ENCODE measurements at regions of chr3 and their contacts with region 1.

Region 1: GRCh38 chr3:187150599-187150998 is 11.3 kb upstream of the RPL39L start:
- DNase-seq: peak; percentile 71
- H3K4me3 Mint-ChIP-seq: no peak overlapping the region
- H3K27ac Mint-ChIP-seq: no peak overlapping the region
- H3K4me1 Mint-ChIP-seq: peaks cover 2% of the 10 kb centered on the region
- H3K27me3 Mint-ChIP-seq: peaks cover 49% of the 10 kb centered on the region

Region 2: GRCh38 chr3:187101184-187102072 is 49.2 kb before region 1 on chr3:
- CTCF ChIA-PET with region 1: interaction called, 12 read pairs
- POLR2A ChIA-PET with region 1: no interaction called
- DNase-seq: peak; percentile 64
- H3K4me3 Mint-ChIP-seq: peak overlapping the region; percentile 56
- H3K27ac Mint-ChIP-seq: peak overlapping the region; percentile 44
- H3K4me1 Mint-ChIP-seq: peaks cover 56% of the 10 kb centered on the region
- H3K27me3 Mint-ChIP-seq: peaks cover 6% of the 10 kb centered on the region

Region 3: DNA sequence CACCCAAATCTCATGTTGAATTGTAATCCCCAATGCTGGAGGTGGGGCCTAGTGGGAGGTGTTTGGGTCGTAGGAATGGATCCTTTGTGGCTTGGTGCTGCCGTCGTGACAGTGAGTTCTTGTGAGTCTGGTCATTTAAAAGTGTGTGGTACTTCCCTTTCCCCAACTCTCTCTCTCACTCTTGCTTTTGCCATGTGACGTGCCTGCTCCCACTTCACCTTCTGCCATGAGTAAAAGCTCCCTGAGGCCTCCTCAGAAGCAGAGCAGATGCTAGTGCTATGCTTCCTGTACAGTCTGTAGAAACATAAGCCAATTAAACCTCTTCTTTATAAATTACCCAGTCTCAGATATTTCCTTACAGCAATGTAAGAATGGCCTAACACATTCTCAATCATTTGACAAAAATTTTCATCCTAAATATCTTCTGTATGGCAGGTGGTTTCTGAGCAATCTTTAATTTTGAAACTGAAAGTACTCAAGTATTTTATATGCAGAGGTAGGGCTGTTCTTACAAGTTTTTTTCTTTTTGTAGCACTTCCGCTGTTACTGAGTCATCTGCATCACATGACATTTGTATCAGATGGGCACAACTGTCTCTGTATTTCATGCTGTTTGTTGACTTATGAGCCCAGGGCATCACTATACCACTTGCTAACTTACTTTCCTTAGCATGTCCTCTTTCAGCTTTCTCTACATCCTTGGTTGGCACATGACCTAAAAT is 20.1 kb before region 1 on chr3:
- CTCF ChIA-PET with region 1: interaction called, 10 read pairs
- POLR2A ChIA-PET with region 1: interaction called, 6 read pairs
- DNase-seq: peak; percentile 47
- H3K4me3 Mint-ChIP-seq: peak overlapping the region; percentile 65
- H3K27ac Mint-ChIP-seq: peak overlapping the region; percentile 96
- H3K4me1 Mint-ChIP-seq: peaks cover 37% of the 10 kb centered on the region
- H3K27me3 Mint-ChIP-seq: no peaks in the 10 kb centered on the region

Region 4: DNA sequence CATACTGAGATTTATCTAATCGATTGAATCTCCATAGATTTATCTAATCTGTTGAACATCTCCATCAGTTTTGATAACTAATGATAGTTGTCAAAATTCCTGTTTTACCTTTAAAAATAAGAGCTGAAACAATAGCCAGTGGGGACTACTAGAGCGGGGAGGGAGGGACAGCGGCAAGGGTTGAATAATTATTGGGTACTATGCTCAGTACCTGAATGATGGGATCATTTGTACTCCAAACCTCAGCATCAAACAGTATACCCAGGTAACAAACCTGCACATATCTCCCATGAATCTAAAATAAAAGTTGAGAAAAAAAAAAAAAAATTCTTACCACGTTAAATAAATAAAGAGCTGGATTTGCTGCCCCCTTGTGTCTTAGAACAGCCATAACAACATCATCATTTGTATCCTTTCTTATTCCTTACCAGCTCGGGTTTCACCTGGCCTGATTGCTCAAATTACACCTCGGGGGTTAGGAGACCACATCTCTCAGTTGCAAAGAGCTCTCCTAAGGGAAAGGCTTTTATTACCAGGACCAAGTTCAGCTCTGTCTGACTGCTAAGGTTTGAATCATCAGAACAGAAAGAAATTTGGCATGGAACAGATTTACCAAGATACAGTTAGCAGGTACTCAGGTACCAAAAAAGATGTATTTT is 14.4 kb after region 1 on chr3:
- CTCF ChIA-PET with region 1: interaction called, 12 read pairs
- POLR2A ChIA-PET with region 1: no interaction called
- DNase-seq: peak; percentile 25
- H3K4me3 Mint-ChIP-seq: no peak overlapping the region
- H3K27ac Mint-ChIP-seq: no peak overlapping the region
- H3K4me1 Mint-ChIP-seq: peaks cover 4% of the 10 kb centered on the region
- H3K27me3 Mint-ChIP-seq: peaks cover 23% of the 10 kb centered on the region